ENCODE measurements at regions of chr7 and their contacts with region 1.

Region 1: GRCh38 chr7:143240291-143241168 is 18.7 kb downstream of the TAS2R40 start:
- DNase-seq: peak; percentile 80
- H3K4me3 ChIP-seq: no peak overlapping the region
- H3K27ac ChIP-seq: no peak overlapping the region
- H3K4me1 ChIP-seq: peaks cover 7% of the 10 kb centered on the region
- H3K27me3 ChIP-seq: peaks cover 2 to 8% of the 10 kb centered on the region in 2 experiments
- CTCF ChIP-seq: peak; percentile 82 to 86
- POLR2A ChIP-seq: no peak

Region 2: GRCh38 chr7:142568435-142569097 is 672.0 kb before region 1 on chr7:
- CTCF ChIA-PET with region 1: no interaction called
- POLR2A ChIA-PET with region 1: no interaction called
- dilution Hi-C with region 1: no loop called
- intact Hi-C with region 1: no loop called
- DNase-seq: peak; percentile 80
- H3K4me3 ChIP-seq: no peak overlapping the region
- H3K27ac ChIP-seq: peak overlapping the region; percentile 44
- H3K4me1 ChIP-seq: peaks cover 27% of the 10 kb centered on the region
- H3K27me3 ChIP-seq: no peaks in the 10 kb centered on the region
- CTCF ChIP-seq: no peak
- POLR2A ChIP-seq: peak; percentile 41

Region 3: DNA sequence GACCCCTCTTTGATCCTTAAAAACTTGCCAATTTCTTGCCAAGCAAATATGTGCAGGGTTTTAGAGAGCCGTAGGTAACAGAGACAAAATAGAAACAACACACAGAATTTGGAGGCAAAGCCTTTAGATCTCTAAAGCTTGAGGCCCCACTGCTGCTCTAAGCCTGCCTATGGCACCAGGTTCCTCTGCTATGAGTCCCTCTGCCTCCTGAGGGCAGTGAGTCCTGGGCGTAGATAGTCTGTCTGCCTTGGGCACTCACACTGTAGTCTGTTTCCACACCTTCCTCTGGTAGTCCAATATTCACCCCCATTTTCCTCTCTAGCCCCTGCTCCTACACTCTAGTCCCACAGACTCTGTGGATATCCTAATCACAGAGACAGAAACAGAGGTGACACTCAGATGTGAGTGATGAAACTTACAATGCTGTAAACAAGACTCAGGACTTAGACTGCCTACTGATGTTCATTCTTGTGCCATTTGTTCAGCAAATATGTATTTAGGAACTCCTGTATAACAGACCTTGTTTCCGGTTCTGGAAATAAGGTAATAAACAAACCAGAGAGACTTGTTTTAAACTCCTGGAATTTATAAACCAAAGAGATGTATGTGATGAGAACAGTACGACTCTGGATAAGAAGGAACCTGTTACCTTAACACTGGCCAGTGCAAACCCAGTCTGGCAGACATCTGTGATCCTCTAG is 644.6 kb before region 1 on chr7:
- CTCF ChIA-PET with region 1: no interaction called
- POLR2A ChIA-PET with region 1: no interaction called
- dilution Hi-C with region 1: no loop called
- intact Hi-C with region 1: no loop called
- DNase-seq: no peak
- H3K4me3 ChIP-seq: no peak overlapping the region
- H3K27ac ChIP-seq: no peak overlapping the region
- H3K4me1 ChIP-seq: no peaks in the 10 kb centered on the region
- H3K27me3 ChIP-seq: no peaks in the 10 kb centered on the region
- CTCF ChIP-seq: no peak
- POLR2A ChIP-seq: no peak

Region 4: DNA sequence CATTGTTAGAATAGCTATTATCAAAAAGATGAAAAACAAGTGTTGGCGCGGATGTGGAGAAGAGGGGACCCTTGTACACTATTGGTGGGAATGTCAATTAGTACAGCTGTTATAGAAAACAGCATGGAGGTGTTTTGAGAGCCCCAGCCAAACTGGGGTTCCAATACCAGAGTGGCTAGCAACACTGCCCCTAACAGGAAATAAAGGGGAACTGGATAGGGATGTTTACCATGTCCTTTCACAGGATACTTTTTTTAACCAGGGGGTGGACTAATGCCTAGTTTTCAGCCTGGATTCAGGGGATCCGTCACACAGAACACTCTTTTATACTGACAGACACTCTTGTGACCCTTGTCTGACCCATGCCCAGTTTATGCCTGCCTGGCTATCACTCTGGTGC is 15.8 kb after region 1 on chr7:
- CTCF ChIA-PET with region 1: interaction called, 19 read pairs
- POLR2A ChIA-PET with region 1: no interaction called
- dilution Hi-C with region 1: no loop called
- intact Hi-C with region 1: no loop called
- DNase-seq: no peak
- H3K4me3 ChIP-seq: no peak overlapping the region
- H3K27ac ChIP-seq: no peak overlapping the region
- H3K4me1 ChIP-seq: peaks cover 2% of the 10 kb centered on the region
- H3K27me3 ChIP-seq: no peaks in the 10 kb centered on the region
- CTCF ChIP-seq: no peak
- POLR2A ChIP-seq: no peak

Region 5: DNA sequence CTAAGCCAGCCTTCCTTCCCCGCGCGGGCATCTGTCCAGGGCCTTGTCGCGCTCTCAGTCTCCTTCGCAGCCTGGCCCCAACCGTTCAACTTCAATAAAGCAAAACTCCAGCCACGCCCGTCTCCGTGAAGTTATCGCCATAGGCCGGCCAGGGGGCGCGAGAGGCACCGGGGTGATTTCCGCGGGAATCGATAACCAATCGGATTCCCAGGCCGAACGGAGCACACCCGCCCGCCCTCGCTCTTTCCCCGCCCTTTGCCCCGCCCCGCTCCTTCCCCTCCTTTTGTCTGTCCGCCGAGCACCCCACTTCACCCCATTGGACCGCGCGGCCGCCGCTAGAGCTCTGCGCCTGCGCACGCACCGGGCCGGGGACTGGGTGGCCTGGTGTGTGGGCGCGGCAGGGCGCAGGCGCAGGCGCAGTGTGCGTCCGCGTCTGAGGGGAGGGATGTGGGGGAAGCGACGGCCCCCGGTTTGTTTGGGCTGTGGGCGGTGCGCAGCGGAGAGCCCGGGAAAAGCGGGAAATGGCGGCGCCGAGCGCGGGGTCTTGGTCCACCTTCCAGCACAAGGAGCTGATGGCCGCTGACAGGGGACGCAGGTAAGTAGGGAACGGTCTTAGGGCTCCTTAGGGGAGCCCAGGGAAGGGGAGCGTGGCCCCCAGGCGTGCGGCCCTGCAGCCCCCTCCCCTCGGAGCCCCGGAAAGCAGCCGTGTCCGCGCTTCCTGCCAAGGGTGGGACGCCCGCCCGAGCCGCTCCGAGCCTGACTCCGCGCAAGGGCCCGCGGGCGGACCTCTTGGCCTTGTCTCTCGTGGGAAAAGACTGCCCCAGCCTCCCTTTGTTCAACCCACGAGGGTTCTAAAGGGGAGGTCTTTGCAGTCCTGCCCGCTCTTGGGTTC is 47.7 kb after region 1 on chr7 and contains the start of gene CASP2:
- CTCF ChIA-PET with region 1: interaction called, 11 read pairs
- POLR2A ChIA-PET with region 1: no interaction called
- dilution Hi-C with region 1: no loop called
- intact Hi-C with region 1: loop called (anchors 5 kb)
- DNase-seq: peak; percentile 99
- H3K4me3 ChIP-seq: peak within 1 kb of the TSS; percentile 81 to 97 (median 91)
- H3K27ac ChIP-seq: peak within 1 kb of the TSS; percentile 91
- H3K4me1 ChIP-seq: peaks cover 24% of the 10 kb centered on the region
- H3K27me3 ChIP-seq: no peaks in the 10 kb centered on the region
- CTCF ChIP-seq: peak in 1 of 2 donors; percentile 40
- POLR2A ChIP-seq: peak; percentile 67
- total RNA-seq, gene CASP2: 57.9 and 61.7 TPM in 2 replicates

Region 6: GRCh38 chr7:143345428-143345900 is 104.9 kb after region 1 on chr7:
- CTCF ChIA-PET with region 1: interaction called, 3 read pairs
- POLR2A ChIA-PET with region 1: no interaction called
- dilution Hi-C with region 1: no loop called
- intact Hi-C with region 1: loop called (anchors 1 kb)
- DNase-seq: peak; percentile 55
- H3K4me3 ChIP-seq: peak overlapping the region in 2 of 3 experiments; percentile 21 to 47
- H3K27ac ChIP-seq: no peak overlapping the region
- H3K4me1 ChIP-seq: peaks cover 4% of the 10 kb centered on the region
- H3K27me3 ChIP-seq: peaks cover 20 to 24% of the 10 kb centered on the region in 2 experiments
- CTCF ChIP-seq: peak; percentile 58 to 73
- POLR2A ChIP-seq: no peak

Region 7: GRCh38 chr7:143416565-143417149 is 176.1 kb after region 1 on chr7:
- CTCF ChIA-PET with region 1: interaction called, 23 read pairs
- POLR2A ChIA-PET with region 1: no interaction called
- dilution Hi-C with region 1: no loop called
- intact Hi-C with region 1: loop called (anchors 1 kb)
- DNase-seq: peak; percentile 56
- H3K4me3 ChIP-seq: no peak overlapping the region
- H3K27ac ChIP-seq: no peak overlapping the region
- H3K4me1 ChIP-seq: peaks cover 9% of the 10 kb centered on the region
- H3K27me3 ChIP-seq: no peaks in the 10 kb centered on the region
- CTCF ChIP-seq: peak; percentile 41 to 59
- POLR2A ChIP-seq: no peak

Region 8: DNA sequence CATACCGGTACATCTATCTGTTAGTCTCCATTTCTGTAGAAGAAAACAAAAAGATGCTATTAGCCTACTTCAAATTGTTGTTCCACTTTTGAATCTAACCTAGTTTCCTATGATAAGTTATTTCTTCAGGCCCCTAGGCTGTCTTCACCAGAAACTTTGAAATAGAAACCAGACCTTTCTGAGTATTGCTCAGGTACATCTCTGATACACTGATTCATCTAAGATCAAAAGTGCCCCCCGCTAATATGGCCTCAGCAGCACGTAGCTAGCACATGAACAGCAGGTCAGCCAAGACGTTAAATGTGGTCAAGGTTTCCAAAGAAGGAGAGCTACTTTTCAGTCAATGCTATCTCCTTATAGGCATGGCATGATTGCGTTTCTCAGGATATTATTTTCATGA is 493.3 kb after region 1 on chr7:
- CTCF ChIA-PET with region 1: interaction called, 21 read pairs
- POLR2A ChIA-PET with region 1: no interaction called
- dilution Hi-C with region 1: no loop called
- intact Hi-C with region 1: no loop called
- DNase-seq: no peak
- H3K4me3 ChIP-seq: no peak overlapping the region
- H3K27ac ChIP-seq: no peak overlapping the region
- H3K4me1 ChIP-seq: no peaks in the 10 kb centered on the region
- H3K27me3 ChIP-seq: no peaks in the 10 kb centered on the region
- CTCF ChIP-seq: no peak
- POLR2A ChIP-seq: no peak

Measured in endothelial cell of umbilical vein (primary cell).